WTC11 (cell line): ENCODE measurements at regions of chr1 and their contacts with region 1.

Region 1: DNA sequence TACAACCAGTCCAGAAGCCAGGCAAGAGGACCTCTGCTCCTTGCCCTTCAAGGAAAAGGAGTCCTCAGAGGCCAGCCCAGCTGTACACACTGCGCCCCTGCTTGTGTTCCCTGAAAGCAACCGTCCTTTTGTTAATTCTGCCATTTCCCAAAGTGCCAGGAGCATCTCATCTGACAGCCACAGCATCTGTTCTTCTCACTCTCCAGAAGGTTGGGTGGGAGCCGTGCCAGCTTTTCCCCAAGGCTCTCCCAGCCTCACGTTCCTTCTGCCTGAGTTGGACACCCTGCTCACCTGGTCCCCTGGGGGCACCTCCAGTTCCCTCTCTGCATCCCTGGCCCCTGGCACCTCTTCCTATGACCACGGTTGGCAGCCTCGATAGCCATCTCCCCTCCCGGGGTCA is 10.5 kb upstream of the CNTN2 start:
- DNase-seq: no peak
- ATAC-seq: no peak
- H3K4me3 Mint-ChIP-seq: no peak overlapping the region
- H3K27ac Mint-ChIP-seq: no peak overlapping the region
- H3K4me1 Mint-ChIP-seq: peaks cover 5% of the 10 kb centered on the region
- H3K27me3 Mint-ChIP-seq: peaks cover 7% of the 10 kb centered on the region
- CTCF ChIP-seq: no peak

Region 2: GRCh38 chr1:205013683-205014367 is 18.7 kb before region 1 on chr1:
- CTCF ChIA-PET with region 1: interaction called, 16 read pairs
- POLR2A ChIA-PET with region 1: interaction called, 3 read pairs
- DNase-seq: no peak
- ATAC-seq: peak; percentile 59
- H3K4me3 Mint-ChIP-seq: no peak overlapping the region
- H3K27ac Mint-ChIP-seq: no peak overlapping the region
- H3K4me1 Mint-ChIP-seq: peaks cover 32% of the 10 kb centered on the region
- H3K27me3 Mint-ChIP-seq: no peaks in the 10 kb centered on the region
- CTCF ChIP-seq: no peak

Region 3: GRCh38 chr1:205172729-205173366 is 140.3 kb after region 1 on chr1:
- CTCF ChIA-PET with region 1: no interaction called
- POLR2A ChIA-PET with region 1: no interaction called
- DNase-seq: no peak
- ATAC-seq: no peak
- H3K4me3 Mint-ChIP-seq: no peak overlapping the region
- H3K27ac Mint-ChIP-seq: peak overlapping the region; percentile 31
- H3K4me1 Mint-ChIP-seq: no peaks in the 10 kb centered on the region
- H3K27me3 Mint-ChIP-seq: no peaks in the 10 kb centered on the region
- CTCF ChIP-seq: no peak